CD8-positive, alpha-beta T cell (primary cell): ENCODE measurements at regions of chr9 and their contacts with region 1.

Region 1: DNA sequence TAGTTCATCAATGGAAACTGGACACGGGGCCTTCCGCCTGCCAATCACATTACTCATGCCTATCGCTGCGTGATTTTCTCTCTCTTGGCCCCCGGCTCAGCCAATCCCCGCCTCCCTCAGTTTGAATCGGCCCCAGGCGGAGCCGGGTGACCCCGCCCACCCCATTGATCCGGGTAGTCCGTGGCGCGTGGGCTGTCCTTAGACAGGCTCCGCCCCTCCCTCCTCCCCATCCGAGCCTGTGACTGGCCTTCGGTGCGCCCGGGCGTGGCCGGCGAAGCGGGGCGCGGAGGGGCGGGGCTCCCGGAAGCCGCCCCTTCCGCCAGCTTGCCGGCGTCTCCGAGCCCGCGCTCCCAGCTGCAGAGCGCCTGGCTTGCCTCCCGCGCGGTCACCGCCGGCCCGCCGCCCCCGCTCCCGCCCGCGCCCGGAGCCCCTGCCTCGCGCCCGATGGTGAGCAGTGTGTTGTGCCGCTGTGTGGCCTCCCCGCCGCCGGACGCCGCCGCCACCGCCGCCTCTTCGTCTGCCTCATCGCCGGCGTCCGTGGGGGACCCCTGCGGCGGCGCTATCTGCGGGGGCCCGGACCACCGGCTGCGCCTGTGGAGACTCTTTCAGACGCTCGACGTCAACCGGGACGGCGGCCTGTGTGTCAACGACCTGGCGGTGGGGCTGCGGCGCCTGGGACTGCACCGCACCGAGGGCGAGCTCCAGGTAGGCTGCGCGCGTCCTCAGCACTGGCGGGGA is at the start of gene SLC25A25:
- DNase-seq: peak; percentile 100
- ATAC-seq: peak; percentile 85
- H3K4me3 ChIP-seq: peak within 1 kb of the TSS; percentile 84 to 87
- H3K4me3 Mint-ChIP-seq: no peak within 1 kb of the TSS
- H3K27ac ChIP-seq: peak within 1 kb of the TSS; percentile 60 to 99
- H3K27ac Mint-ChIP-seq: peak within 1 kb of the TSS; percentile 93
- H3K4me1 ChIP-seq: peaks cover 62% of the 10 kb centered on the region
- H3K4me1 Mint-ChIP-seq: peaks cover 60% of the 10 kb centered on the region
- H3K27me3 ChIP-seq: no peaks in the 10 kb centered on the region
- H3K27me3 Mint-ChIP-seq: no peaks in the 10 kb centered on the region
- CTCF ChIP-seq: no peak
- total RNA-seq, gene SLC25A25: 12.1 to 12.2 TPM

Region 2: DNA sequence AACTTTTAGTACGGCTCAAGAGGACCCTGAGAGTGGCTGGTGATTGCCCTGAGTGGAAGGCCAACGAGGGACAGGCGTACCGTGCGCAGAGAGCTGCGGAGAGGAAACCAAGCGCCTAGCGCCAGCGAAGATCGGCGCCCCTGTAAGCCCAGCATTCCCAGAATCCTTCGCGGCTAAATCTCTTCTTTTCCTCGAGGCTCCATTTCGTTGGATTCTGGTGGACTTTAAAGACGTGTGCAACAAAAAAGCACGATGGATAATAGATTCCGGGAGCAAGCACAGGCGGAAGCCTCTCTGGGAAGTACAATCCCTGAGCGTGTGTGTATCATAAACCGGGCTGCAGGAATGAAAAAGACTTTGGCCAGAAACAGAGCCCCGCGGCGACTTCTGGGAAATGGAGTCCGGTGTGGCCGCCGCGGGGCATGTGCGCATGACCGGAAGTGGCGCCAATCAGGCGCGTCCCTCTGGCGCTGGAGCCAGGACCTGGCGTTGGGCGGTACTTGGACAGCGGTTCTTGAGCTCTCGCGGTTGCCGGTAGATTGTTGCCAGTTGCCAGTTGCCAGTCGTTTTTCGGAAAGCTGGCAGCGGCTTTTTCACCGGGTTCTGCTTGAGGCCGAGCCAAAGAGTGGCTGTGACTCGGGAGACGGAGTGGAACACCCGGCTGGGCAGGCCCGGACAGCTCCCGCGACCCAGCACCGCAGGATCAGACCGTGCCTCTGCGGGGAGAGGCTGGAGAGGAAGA is 643.9 kb before region 1 on chr9 and contains the start of gene ZNF79:
- CTCF ChIA-PET with region 1: no interaction called
- POLR2A ChIA-PET with region 1: no interaction called
- intact Hi-C with region 1: loop called in 1 of 2 experiments (anchors 10 kb)
- DNase-seq: peak; percentile 81 to 94 (median 91)
- ATAC-seq: peak; percentile 84
- H3K4me3 ChIP-seq: peak within 1 kb of the TSS; percentile 71 to 98
- H3K4me3 Mint-ChIP-seq: peak within 1 kb of the TSS; percentile 99
- H3K27ac ChIP-seq: peak within 1 kb of the TSS; percentile 67 to 72
- H3K27ac Mint-ChIP-seq: peak within 1 kb of the TSS; percentile 95
- H3K4me1 ChIP-seq: peaks cover 25% of the 10 kb centered on the region
- H3K4me1 Mint-ChIP-seq: peaks cover 44% of the 10 kb centered on the region
- H3K27me3 ChIP-seq: no peaks in the 10 kb centered on the region
- H3K27me3 Mint-ChIP-seq: no peaks in the 10 kb centered on the region
- CTCF ChIP-seq: no peak
- total RNA-seq, gene ZNF79: 7.5 to 7.7 TPM

Region 3: DNA sequence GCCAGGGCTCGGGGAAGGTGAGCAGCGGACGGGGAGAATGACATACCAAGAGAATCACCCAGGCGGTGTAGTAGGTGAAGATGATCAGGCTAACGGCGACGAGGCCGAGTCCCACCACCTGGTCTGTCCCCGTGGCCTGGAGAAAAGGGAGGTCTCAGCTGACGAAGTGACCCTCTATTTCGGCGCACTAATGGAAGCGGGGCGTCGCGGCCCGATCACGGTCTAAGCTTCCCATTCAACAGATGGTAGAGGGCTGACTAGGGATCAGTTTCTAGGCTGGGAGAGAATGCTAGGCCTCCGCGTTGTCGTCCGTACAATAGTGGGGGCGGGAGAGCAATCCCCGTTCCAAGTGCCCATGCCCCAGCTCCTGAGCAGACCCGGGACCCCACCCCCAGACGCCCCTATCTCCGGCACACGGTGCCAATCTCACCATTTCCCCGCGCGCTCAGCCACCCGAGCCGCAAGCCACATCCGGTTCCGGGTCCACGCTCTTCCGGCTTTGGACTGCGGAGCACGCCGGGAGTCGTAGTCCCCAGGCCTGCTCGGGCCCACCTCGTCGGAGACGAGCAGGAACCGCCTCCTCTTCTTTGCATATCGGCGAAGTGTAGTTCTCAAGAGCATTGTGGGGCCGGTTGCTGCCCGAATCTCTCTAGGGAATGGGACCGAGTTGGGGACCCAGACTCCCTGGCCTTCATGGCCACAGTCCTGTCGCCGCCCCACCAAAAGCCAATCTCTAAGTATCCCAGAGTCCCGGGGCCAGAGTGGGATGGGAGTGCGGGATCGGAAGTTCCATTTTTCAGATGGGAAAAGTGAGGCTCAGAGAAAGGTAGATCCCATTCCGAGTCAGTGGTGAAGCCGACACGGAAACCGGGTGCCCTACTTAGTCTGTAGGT is 130.4 kb before region 1 on chr9 and contains the start of gene DPM2:
- CTCF ChIA-PET with region 1: interaction called, 6 read pairs
- POLR2A ChIA-PET with region 1: interaction called, 6 read pairs
- intact Hi-C with region 1: loop called in 1 of 2 experiments (anchors 1 kb)
- DNase-seq: peak; percentile 67 to 94 (median 87)
- ATAC-seq: peak; percentile 87
- H3K4me3 ChIP-seq: peak within 1 kb of the TSS; percentile 70 to 83
- H3K4me3 Mint-ChIP-seq: peak within 1 kb of the TSS; percentile 87
- H3K27ac ChIP-seq: peak within 1 kb of the TSS; percentile 55 to 84
- H3K27ac Mint-ChIP-seq: peak within 1 kb of the TSS; percentile 92
- H3K4me1 ChIP-seq: peaks cover 26% of the 10 kb centered on the region
- H3K4me1 Mint-ChIP-seq: peaks cover 44% of the 10 kb centered on the region
- H3K27me3 ChIP-seq: no peaks in the 10 kb centered on the region
- H3K27me3 Mint-ChIP-seq: no peaks in the 10 kb centered on the region
- CTCF ChIP-seq: no peak
- total RNA-seq, gene DPM2: 40.2 to 42.7 TPM

Region 4: DNA sequence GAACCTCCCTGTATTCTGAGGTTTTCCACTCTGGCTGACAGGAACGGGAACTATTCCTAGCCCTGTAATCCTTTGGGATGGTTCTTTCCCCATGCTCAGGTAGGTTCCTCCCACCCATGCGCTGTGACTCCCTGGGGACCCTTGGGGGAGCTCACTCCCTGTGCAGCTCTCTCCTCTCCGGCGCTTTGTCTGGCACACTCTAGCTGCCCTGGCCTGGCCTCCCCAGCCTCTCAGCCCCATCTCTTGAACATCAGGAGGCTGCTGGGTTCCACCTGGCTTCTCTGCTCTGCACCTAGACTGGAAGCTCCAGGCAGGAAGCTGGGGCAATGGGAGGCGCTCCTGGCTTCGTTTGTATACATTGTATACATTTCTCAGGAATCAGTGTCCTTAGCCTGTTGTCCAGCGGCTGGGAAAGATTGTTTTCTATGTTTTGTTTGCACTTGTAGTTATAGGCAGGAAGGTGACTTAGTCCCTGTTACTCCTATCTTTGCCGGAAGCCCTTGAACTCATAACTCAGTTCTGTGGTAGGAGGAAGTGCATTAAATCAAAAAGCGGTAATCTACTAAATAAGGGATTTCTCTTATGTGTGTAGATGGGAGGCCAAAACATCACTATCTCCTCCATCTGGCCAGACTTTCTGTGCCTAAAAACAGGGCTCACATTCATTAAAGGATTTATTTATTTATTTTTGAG is 20.4 kb after region 1 on chr9:
- CTCF ChIA-PET with region 1: interaction called, 6 read pairs
- POLR2A ChIA-PET with region 1: interaction called, 24 read pairs
- intact Hi-C with region 1: loop called in 1 of 2 experiments (anchors 1 kb)
- DNase-seq: peak in 1 of 9 experiments; percentile 49
- ATAC-seq: peak; percentile 26
- H3K4me3 ChIP-seq: no peak overlapping the region
- H3K4me3 Mint-ChIP-seq: peak overlapping the region; percentile 24
- H3K27ac ChIP-seq: peak overlapping the region in 1 of 2 experiments; percentile 8
- H3K27ac Mint-ChIP-seq: peak overlapping the region; percentile 57
- H3K4me1 ChIP-seq: peaks cover 57% of the 10 kb centered on the region
- H3K4me1 Mint-ChIP-seq: peaks cover 62% of the 10 kb centered on the region
- H3K27me3 ChIP-seq: no peaks in the 10 kb centered on the region
- H3K27me3 Mint-ChIP-seq: no peaks in the 10 kb centered on the region
- CTCF ChIP-seq: no peak

Region 5: DNA sequence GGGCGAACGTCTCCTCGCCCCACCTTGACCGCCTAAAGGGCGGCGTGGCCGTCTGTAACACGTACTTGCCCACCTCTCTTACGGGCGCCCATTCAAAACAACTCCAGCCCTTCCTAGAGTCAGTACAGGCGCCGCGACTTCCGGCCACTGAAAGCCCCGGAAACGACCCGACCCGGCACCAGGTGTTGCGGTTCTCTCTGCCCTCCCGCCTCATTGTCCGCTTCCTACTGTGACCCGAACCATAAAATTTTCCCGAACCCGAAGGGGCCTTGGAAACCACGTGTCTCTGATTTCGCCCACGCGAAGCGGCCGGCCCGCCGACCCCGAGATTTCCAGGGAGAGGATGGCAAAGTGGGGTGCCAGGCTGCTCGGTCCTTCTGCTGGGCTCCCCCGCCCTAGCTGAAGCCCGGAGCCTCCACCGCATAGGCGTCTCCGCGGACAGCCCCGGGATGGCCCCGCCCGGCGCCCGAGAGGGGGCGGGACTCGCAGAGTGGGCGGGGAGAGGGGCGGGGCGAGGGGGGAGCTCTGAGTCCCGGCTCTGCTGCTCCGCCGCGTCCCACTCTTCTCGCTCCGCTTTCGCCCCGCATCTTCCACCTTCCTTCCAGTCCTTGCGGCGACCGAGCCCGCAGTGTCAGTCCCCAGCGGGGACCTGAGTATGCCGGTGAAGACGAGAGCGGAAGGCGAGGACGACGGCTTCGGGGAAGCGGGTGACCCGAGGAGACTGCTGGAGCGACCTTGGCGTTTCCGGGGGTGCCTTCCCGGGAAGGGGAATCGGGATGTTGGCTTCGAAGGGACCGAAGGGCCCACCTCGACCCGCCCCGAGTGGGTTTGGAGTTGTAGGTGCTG is 60.2 kb after region 1 on chr9:
- CTCF ChIA-PET with region 1: interaction called, 3 read pairs
- POLR2A ChIA-PET with region 1: interaction called, 3 read pairs
- intact Hi-C with region 1: loop called (anchors 1 kb)
- DNase-seq: peak; percentile 69 to 95 (median 83)
- ATAC-seq: peak; percentile 81
- H3K4me3 ChIP-seq: peak overlapping the region; percentile 99 to 100
- H3K4me3 Mint-ChIP-seq: peak overlapping the region; percentile 99
- H3K27ac ChIP-seq: peak overlapping the region; percentile 99
- H3K27ac Mint-ChIP-seq: peak overlapping the region; percentile 99
- H3K4me1 ChIP-seq: peaks cover 31% of the 10 kb centered on the region
- H3K4me1 Mint-ChIP-seq: peaks cover 38% of the 10 kb centered on the region
- H3K27me3 ChIP-seq: no peaks in the 10 kb centered on the region
- H3K27me3 Mint-ChIP-seq: peaks cover 2% of the 10 kb centered on the region
- CTCF ChIP-seq: no peak

Region 6: GRCh38 chr9:128296337-128297220 is 228.5 kb after region 1 on chr9:
- CTCF ChIA-PET with region 1: no interaction called
- POLR2A ChIA-PET with region 1: no interaction called
- intact Hi-C with region 1: no loop called
- DNase-seq: no peak
- ATAC-seq: no peak
- H3K4me3 ChIP-seq: no peak overlapping the region
- H3K4me3 Mint-ChIP-seq: no peak overlapping the region
- H3K27ac ChIP-seq: no peak overlapping the region
- H3K27ac Mint-ChIP-seq: no peak overlapping the region
- H3K4me1 ChIP-seq: no peaks in the 10 kb centered on the region
- H3K4me1 Mint-ChIP-seq: peaks cover 3% of the 10 kb centered on the region
- H3K27me3 ChIP-seq: no peaks in the 10 kb centered on the region
- H3K27me3 Mint-ChIP-seq: no peaks in the 10 kb centered on the region
- CTCF ChIP-seq: no peak

Region 7: DNA sequence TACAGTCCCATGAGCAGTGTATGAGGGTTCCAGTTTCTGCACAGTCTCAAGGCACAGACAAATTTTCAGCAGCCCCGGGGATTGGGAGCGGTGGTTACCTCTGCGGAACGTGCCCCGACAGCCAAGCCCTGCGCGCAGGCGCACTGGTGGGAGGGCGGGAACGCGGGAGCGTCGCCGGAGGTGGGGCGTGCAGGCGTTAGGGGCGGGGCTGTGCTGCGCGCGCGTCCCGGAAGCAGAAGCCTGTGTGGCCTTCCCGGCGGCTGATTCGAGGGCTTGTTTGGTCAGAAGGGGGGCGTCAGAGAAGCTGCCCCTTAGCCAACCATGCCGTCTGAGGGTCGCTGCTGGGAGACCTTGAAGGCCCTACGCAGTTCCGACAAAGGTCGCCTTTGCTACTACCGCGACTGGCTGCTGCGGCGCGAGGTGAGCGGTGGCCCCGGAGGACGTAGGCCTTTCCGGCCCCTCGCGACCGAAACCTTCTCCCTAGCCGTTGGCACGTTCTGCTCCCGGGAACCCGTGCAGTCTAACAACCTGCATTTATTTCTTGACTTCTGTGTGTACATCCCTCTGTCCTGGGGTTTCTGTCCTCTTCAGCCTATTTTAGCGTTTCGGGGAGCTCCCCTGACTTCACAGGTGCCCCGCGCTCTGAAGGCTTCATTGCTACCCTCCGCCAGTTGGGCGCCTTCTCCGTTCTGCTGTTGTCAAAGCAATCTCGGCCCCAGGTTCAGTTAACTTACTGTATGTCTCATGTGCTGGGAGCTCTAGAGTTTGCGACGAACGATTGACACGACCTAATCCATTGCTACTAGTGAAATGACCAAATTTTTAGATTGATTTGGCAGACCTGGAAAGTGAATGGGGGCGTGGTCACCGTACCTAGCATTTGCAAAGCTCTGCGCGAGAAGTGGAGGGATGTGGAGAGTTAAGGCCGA is 436.7 kb after region 1 on chr9 and contains the start of gene GLE1:
- CTCF ChIA-PET with region 1: no interaction called
- POLR2A ChIA-PET with region 1: no interaction called
- intact Hi-C with region 1: loop called in 1 of 2 experiments (anchors 5 kb)
- DNase-seq: peak; percentile 93 to 99 (median 97)
- ATAC-seq: peak; percentile 95
- H3K4me3 ChIP-seq: peak within 1 kb of the TSS; percentile 80 to 96
- H3K4me3 Mint-ChIP-seq: peak within 1 kb of the TSS; percentile 99
- H3K27ac ChIP-seq: peak within 1 kb of the TSS; percentile 84 to 90
- H3K27ac Mint-ChIP-seq: peak within 1 kb of the TSS; percentile 99
- H3K4me1 ChIP-seq: peaks cover 18% of the 10 kb centered on the region
- H3K4me1 Mint-ChIP-seq: peaks cover 38% of the 10 kb centered on the region
- H3K27me3 ChIP-seq: no peaks in the 10 kb centered on the region
- H3K27me3 Mint-ChIP-seq: no peaks in the 10 kb centered on the region
- CTCF ChIP-seq: no peak
- total RNA-seq, gene GLE1: 6.6 to 8.5 TPM